Activated CD4-positive, alpha-beta T cell treated with anti-CD3 and anti-CD28 coated beads, Interleukin-2, amount 10 ng/mL, durations not matched to agents 24 days and 14 days (primary cell): ENCODE measurements at regions of chr1 and their contacts with region 1.

Region 1: GRCh38 chr1:100443811-100444571 is 91.7 kb downstream of the CDC14A start:
- DNase-seq: peak; percentile 82
- H3K4me3 Mint-ChIP-seq: peak overlapping the region; percentile 86
- H3K27ac Mint-ChIP-seq: peak overlapping the region; percentile 96
- H3K4me1 Mint-ChIP-seq: peaks cover 72% of the 10 kb centered on the region
- H3K27me3 Mint-ChIP-seq: no peaks in the 10 kb centered on the region

Region 2: DNA sequence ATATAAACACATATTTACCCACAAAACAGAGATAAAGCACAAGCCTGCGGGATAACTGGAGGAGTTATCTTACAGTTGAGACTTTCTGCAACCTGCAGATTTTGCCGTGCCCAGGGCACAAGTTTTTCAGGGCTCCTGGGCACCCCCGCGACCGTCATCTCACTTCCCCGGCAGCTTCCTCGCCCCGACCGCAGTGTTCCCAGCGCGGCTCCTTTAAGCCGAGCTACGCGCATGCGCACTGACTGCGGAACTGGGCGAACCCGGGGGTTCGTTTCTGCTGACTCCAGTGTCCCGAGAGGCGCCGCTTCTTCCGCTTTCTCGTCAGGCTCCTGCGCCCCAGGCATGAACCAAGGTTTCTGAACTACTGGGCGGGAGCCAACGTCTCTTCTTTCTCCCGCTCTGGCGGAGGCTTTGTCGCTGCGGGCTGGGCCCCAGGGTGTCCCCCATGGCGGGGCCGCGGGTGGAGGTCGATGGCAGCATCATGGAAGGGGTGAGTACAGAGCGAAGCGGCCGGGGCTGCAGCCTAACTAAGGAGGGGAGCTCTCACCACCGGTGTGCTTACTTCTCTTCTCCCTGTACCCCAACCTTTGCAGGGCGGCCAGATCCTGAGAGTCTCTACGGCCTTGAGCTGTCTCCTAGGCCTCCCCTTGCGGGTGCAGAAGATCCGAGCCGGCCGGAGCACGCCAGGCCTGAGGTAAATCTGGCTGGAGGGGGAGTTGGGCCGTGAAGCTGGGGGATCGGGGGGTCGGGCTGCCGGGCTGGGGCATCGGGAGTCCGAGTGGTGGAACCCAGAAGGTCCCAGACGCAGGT is 177.9 kb before region 1 on chr1 and contains the start of gene RTCA:
- intact Hi-C with region 1: loop called (anchors 5 kb)
- DNase-seq: peak; percentile 99
- H3K4me3 Mint-ChIP-seq: peak within 1 kb of the TSS; percentile 98
- H3K27ac Mint-ChIP-seq: peak within 1 kb of the TSS; percentile 96
- H3K4me1 Mint-ChIP-seq: peaks cover 34% of the 10 kb centered on the region
- H3K27me3 Mint-ChIP-seq: no peaks in the 10 kb centered on the region
- total RNA-seq, gene RTCA: 48.5 and 49.1 TPM in 2 replicates

Region 3: DNA sequence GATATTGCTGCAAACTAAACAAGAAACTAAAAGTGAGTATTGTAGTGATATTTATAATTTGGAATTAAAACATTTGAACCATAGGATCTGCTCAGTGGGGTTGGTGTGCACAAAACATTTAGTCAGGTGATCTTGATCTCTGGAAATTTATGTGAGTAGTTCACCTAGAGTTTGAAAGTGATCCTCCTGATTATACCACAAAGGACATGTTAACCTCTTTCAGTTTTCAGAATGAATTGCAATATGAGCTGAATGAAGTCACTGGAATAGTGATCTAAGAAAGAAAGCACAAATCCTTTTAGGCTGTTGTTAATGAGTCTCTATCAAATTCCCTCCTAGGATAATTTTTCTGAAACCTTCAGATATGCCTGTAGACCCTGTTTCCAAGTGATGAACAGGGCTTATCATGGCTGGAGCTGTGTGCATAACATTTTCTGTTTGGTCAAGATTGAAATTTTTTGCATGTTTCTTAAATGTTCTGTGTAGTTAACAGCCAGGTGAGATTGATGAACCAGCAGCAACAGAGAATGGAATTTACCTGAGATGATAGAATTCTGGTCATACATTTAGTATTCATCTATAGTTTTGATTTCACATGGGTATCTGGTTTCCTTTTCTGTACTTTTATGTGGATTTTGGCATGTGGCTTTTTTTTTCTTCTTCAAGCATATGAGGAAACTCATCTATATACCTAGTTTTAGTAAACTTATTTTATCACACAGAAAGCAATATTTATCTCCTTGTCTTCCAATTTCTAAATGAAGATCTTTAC is 66.2 kb before region 1 on chr1:
- intact Hi-C with region 1: loop called (anchors 2 kb)
- DNase-seq: no peak
- H3K4me3 Mint-ChIP-seq: peak overlapping the region; percentile 61
- H3K27ac Mint-ChIP-seq: peak overlapping the region; percentile 88
- H3K4me1 Mint-ChIP-seq: peaks cover 36% of the 10 kb centered on the region
- H3K27me3 Mint-ChIP-seq: no peaks in the 10 kb centered on the region

Region 4: DNA sequence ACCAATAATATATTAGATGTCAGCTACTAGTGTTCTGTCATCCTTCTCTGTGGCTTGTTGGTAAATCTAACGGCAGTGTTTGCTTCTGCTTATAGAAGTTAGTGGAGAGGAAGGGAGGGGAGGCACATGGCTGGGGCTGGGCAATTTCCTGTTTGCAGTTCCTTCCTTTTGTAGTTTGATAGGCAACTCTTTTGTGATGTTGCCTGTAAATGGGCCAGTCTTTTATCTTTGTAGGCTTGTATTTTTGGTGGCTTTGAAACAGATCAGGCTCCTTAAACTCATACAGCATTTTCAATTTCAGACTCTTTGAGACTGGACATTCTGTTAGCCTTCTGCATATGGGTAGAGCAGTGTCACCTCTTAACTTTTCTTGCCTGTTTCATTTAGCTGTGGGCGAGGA is 43.6 kb before region 1 on chr1:
- intact Hi-C with region 1: loop called (anchors 2 kb)
- DNase-seq: peak; percentile 90
- H3K4me3 Mint-ChIP-seq: peak overlapping the region; percentile 73
- H3K27ac Mint-ChIP-seq: peak overlapping the region; percentile 92
- H3K4me1 Mint-ChIP-seq: peaks cover 69% of the 10 kb centered on the region
- H3K27me3 Mint-ChIP-seq: no peaks in the 10 kb centered on the region

Region 5: GRCh38 chr1:100423832-100424337 is 20.1 kb before region 1 on chr1:
- intact Hi-C with region 1: loop called (anchors 2 kb)
- DNase-seq: peak; percentile 71
- H3K4me3 Mint-ChIP-seq: peak overlapping the region; percentile 58
- H3K27ac Mint-ChIP-seq: peak overlapping the region; percentile 77
- H3K4me1 Mint-ChIP-seq: peaks cover 39% of the 10 kb centered on the region
- H3K27me3 Mint-ChIP-seq: no peaks in the 10 kb centered on the region

Region 6: DNA sequence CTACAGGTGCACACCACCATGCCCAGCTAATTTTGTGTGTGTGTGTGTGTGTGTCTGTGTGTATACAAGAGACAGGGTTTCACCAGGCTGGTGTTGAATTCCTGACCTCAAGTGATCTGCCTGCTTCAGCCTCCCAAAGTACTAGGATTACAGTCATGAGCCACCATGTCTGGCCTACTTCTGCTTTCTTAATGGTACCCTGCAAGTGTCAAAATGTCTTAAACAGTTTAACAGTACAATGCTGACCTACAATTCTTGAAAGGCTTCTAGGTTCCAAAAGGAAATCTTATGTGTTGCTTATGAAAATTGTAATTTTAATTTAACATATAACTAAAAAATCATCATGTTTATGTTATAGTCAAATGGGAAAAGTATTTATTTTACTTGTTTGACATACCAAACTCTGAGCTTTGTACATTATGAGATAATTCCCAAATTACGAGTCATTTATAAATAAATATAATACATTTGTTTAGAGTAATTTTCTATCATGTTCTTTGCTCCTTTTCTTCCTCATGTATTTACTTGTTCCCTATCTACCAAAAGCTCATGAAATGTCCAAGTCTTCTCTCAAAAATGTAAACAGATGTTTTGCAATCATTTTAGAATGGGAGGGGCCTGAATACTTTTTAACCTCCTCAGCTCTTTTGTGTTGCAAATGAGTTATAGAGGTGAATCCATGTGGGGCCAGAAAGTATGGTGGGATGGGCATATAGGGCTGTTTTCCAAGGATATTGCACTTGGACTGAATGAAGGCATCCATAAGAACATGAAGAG is 267.1 kb after region 1 on chr1:
- intact Hi-C with region 1: no loop called
- DNase-seq: no peak
- H3K4me3 Mint-ChIP-seq: no peak overlapping the region
- H3K27ac Mint-ChIP-seq: no peak overlapping the region
- H3K4me1 Mint-ChIP-seq: peaks cover 10% of the 10 kb centered on the region
- H3K27me3 Mint-ChIP-seq: peaks cover 5% of the 10 kb centered on the region